ENCODE measurements at regions of chr6 and their contacts with region 1.

Region 1: GRCh38 chr6:90296346-90297114 is at the start of gene BACH2:
- DNase-seq: peak; percentile 91
- total RNA-seq, gene BACH2: 8.4 TPM

Region 2: GRCh38 chr6:89970609-89971337 is 325.8 kb before region 1 on chr6:
- intact Hi-C with region 1: loop called (anchors 5 kb)
- DNase-seq: no peak

Region 3: GRCh38 chr6:90098001-90098531 is 198.5 kb before region 1 on chr6:
- intact Hi-C with region 1: loop called (anchors 5 kb)
- DNase-seq: no peak

Region 4: DNA sequence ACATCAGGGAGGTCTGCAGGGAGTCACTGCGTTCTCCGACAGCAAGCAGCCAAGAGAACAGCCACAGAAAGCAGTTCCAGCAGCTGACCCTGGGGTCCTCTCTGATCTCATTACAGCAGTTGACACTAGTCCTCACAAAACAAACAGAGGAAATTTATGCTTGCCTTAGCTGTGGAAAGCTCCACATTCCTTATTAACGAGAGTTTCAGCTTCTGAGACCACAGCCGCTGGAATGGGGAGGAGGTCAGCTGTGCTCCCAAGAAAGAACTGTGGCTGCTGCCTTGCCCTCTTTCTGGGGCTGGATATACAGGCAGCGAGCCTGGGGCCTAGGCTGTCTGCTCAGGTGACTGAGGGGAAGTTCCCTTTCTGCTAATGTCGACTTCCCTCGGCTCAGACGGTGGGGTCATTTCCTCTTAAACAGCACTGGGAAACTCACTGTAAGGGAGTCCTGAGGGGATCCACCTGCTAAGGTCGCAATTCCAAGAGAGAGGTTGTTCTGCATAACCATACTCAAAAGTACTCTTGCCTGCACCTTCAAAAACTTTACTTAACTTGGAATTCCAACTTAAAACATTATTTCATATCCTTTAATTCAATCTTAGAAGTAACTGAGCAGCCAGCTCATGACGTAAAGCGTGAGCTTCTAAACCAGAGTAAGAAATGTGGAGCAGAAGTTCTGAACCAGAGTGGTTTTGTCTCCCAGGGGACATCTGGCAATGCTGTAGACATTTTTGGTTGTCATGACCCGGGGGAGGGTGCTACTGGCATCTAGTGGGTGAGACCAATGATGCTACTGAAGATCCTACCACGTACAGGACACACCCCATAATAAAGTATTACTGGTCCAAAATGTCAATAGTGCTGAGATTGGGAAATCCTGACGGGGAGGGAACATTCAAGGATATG is 80.2 kb before region 1 on chr6:
- intact Hi-C with region 1: loop called (anchors 2 kb)
- DNase-seq: no peak

Region 5: GRCh38 chr6:90393232-90393884 is 96.8 kb after region 1 on chr6:
- intact Hi-C with region 1: loop called (anchors 5 kb)
- DNase-seq: no peak

Region 6: DNA sequence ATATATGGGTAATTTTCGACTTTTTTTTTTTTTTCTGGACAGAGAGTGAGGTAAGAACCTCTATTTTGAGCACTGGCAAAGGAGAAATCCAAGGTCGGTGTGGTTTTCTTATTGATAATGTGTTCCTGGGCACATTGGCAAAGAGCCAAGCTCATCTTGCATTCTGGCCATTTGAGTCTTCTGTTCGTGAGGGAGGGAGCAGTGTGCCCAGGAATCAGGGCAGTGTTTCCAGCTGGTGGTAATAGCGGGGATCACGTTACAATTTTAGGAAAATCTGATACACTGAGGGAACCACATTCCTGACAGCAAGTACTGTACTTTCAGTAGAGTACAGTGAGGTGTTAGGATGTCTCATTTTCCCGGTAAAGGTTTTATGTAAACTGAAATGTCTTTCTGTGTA is 732.7 kb after region 1 on chr6:
- intact Hi-C with region 1: no loop called
- DNase-seq: no peak